ENCODE measurements at regions of chr9 and their contacts with region 1.

Region 1: GRCh38 chr9:71768388-71769174 is at the start of gene CEMIP2:
- H3K4me3 Mint-ChIP-seq: peak within 1 kb of the TSS; percentile 90
- H3K27ac Mint-ChIP-seq: peak within 1 kb of the TSS; percentile 90
- H3K4me1 Mint-ChIP-seq: peaks cover 52% of the 10 kb centered on the region
- H3K27me3 Mint-ChIP-seq: peaks cover 23% of the 10 kb centered on the region

Region 2: DNA sequence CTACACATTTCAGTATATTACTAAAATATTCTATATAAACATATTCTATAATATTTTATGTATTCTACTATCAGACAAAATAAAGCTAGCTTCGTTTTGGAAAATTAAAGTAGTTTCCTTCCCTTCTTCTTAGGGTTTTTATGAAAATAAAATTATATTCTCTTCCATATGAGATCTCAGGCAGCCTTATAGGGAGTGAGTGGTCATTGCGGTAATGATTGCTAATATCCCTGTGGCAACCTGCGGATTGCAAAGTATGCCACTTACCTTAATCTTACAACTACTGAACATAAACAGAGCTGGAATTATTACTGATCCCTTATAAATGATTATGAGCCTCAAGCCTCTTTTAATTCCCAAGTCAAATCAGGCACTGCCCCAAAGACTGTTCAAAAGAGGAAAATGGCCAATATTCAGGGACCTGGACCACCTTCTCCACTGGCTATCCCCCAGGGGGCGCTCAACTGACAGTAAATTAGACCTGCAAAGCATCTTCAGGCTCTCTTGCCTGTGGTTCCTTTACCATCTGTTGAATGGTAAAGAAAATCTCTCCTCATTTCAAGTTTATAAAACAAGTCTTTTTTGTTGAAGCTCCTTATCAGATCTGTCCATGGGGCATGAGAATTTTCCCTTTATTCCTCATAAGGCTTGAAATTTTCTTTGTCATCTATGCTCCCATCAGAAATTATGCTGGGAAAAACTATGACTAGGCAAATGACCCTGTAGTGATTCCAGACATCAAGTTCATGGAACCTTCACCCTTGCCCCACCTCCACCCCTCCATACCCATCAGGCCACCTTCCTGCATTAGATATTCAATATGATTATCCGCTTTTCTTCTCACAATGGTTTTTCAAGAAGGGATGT is 164.2 kb before region 1 on chr9:
- intact Hi-C with region 1: loop called (anchors 1 kb)
- H3K4me3 Mint-ChIP-seq: no peak overlapping the region
- H3K27ac Mint-ChIP-seq: no peak overlapping the region
- H3K4me1 Mint-ChIP-seq: no peaks in the 10 kb centered on the region
- H3K27me3 Mint-ChIP-seq: no peaks in the 10 kb centered on the region

Region 3: GRCh38 chr9:71628247-71628646 is 140.3 kb before region 1 on chr9:
- intact Hi-C with region 1: loop called (anchors 1 kb)
- H3K4me3 Mint-ChIP-seq: no peak overlapping the region
- H3K27ac Mint-ChIP-seq: no peak overlapping the region
- H3K4me1 Mint-ChIP-seq: peaks cover 14% of the 10 kb centered on the region
- H3K27me3 Mint-ChIP-seq: peaks cover 5% of the 10 kb centered on the region

Region 4: DNA sequence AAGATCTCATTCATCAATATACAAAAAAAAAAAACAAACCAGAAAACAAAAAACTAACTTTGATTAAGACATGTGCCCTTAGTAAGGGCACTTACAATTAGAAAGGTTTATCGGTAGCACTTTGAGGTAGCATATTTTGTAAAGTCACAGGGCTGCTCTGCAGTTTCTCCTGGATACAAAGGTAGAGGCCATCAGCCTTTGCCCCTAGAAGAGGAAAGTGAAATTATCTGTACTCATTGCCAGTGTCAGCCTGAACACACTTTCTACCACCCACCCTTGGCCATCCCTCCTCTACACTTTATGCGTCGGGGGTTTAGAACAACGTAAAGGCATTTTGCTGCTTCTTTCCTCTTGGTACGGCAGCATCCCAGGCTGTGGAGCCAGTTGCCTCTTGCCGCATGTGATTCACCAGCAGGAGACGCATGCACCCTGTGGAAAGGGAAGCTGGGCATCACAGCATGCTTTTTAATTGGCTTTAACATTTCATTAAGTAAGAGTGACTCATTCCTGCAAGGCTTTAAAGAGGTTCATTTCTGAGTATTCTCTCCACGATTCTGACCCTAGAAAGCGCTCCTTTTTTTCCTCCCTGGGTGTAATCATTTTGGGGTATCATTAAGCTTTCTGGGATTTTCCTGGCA is 84.9 kb before region 1 on chr9:
- intact Hi-C with region 1: loop called (anchors 2 kb)
- H3K4me3 Mint-ChIP-seq: no peak overlapping the region
- H3K27ac Mint-ChIP-seq: peak overlapping the region; percentile 68
- H3K4me1 Mint-ChIP-seq: peaks cover 51% of the 10 kb centered on the region
- H3K27me3 Mint-ChIP-seq: peaks cover 3% of the 10 kb centered on the region

Region 5: DNA sequence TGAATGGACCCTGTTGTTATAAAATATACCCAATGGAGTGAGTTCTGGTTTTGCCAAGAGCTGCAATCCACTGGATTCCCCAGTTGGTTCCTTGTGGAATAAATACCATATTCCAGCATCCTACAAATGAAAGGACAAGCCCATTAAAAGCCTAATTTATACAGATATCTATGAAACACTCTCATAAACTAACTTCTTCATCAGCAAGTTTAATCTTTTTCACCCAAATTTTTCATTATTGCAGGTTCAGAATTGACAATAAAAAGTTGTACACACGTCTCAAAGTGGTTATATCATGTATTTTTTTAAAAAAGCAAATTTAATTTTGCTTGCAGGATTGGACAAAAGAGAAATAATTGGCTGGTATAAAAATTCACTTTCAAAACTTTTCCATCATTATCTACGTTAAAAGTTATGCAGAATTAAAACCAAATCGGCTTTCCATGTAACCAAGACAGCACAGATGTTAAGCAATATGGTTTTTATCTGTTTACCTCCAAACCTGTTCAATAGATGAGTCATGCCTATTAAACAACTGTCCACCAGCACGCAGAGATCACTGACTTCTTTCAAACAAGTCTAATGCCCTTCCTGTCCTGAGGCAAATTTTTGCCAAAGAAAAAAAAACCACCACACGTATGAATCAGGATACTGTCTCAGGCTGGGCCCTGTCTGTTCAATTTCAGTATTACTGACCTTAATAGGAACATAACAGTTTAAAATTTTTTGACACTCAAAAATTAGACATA is 42.8 kb before region 1 on chr9:
- intact Hi-C with region 1: loop called (anchors 5 kb)
- H3K4me3 Mint-ChIP-seq: no peak overlapping the region
- H3K27ac Mint-ChIP-seq: no peak overlapping the region
- H3K4me1 Mint-ChIP-seq: peaks cover 8% of the 10 kb centered on the region
- H3K27me3 Mint-ChIP-seq: no peaks in the 10 kb centered on the region

Region 6: DNA sequence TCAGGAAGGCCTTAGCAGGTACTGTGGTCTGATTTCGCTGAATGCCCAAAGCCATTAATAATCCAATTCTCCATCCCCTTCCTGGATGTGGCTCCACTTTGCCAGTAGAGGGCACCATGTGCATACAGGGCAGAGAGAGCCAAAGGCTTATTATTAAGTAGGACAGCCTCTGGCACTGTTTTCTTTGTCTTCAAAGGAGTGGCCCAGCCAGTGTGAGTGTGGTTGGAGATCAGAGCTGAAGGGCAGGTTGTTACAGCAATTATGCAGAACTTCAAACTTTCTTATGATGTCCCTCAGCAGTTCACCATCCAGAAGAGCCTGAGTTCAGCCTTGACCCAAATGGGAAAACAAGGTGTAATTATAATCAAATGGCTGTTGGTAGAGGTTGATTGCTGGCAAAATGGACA is 38.3 kb after region 1 on chr9:
- intact Hi-C with region 1: no loop called
- H3K4me3 Mint-ChIP-seq: no peak overlapping the region
- H3K27ac Mint-ChIP-seq: no peak overlapping the region
- H3K4me1 Mint-ChIP-seq: no peaks in the 10 kb centered on the region
- H3K27me3 Mint-ChIP-seq: no peaks in the 10 kb centered on the region

Region 7: GRCh38 chr9:71854811-71855210 is 86.2 kb after region 1 on chr9:
- intact Hi-C with region 1: no loop called
- H3K4me3 Mint-ChIP-seq: no peak overlapping the region
- H3K27ac Mint-ChIP-seq: no peak overlapping the region
- H3K4me1 Mint-ChIP-seq: no peaks in the 10 kb centered on the region
- H3K27me3 Mint-ChIP-seq: no peaks in the 10 kb centered on the region

Region 8: GRCh38 chr9:71911253-71912074 is 142.9 kb after region 1 on chr9 and contains the start of gene C9orf85:
- intact Hi-C with region 1: loop called (anchors 5 kb)
- H3K4me3 Mint-ChIP-seq: peak within 1 kb of the TSS; percentile 90
- H3K27ac Mint-ChIP-seq: peak within 1 kb of the TSS; percentile 95
- H3K4me1 Mint-ChIP-seq: peaks cover 44% of the 10 kb centered on the region
- H3K27me3 Mint-ChIP-seq: no peaks in the 10 kb centered on the region